ENCODE measurements at regions of chr9 and their contacts with region 1.

Region 1: DNA sequence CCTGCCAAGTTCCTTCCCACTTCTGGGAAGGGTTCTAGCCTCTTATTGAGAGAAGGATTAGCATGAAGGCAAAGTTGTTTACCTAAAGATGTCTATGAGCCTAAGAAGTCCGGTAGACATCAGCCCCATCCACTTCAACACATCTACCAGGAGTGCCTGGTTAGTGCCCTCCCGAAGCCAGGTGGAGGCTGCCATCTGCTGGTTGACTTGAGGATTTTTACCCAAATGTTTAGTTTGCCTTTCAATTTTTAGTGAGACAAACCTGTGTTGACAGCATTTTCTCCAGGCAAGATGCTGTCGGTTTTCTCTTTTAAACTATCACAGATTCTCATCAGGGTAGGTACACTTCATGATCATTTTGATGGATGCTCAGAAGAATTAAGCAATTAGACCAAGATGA is 83.6 kb upstream of the TNFSF8 start:
- DNase-seq: peak; percentile 67 to 71 (median 69)
- ATAC-seq: peak; percentile 88
- H3K4me3 ChIP-seq: no peak overlapping the region
- H3K27ac ChIP-seq: no peak overlapping the region
- H3K4me1 ChIP-seq: no peaks in the 10 kb centered on the region
- H3K27me3 ChIP-seq: no peaks in the 10 kb centered on the region
- CTCF ChIP-seq: peak; percentile 77 to 89 (median 79)
- EP300 ChIP-seq: no peak
- POLR2A ChIP-seq: no peak
- RAD21 ChIP-seq: peak; percentile 84 to 87

Region 2: DNA sequence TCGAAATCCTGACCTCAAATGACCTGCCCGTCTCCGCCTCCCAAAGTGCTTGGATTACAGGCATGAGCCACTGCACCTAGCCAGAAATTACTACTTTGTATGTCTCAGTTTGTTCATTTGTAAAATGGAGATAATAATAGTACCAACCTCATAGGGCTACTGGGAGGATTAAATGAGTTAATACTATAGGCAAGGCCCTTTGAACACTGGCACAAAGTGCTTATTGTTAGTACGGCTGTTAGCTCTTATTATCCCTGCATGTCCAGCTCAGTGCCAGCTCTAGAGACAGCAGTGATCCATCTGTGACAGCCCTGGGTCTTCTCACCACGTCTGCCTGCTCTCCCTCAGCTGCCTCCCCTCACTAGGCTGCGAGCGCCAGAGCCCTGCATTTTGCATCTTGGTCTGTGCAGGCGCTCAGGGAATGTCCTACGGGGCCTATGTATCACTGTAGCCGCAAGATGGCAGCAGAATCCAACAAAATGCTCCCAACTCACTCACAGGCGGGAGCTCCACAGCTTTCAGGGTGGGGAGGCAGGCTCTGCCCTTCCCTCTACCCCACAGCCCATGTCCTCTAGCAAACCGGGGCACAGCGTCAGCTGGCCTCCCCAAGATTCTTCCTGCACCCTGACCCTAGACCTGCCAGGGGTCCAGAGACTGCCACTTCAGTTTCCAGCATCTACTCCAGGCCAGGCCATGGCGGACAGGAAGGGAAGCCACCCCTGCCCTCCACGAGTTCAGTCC is 608.5 kb before region 1 on chr9:
- CTCF ChIA-PET with region 1: interaction called, 8 read pairs
- POLR2A ChIA-PET with region 1: no interaction called
- in situ Hi-C with region 1: no loop called
- intact Hi-C with region 1: loop called (anchors 1 kb)
- DNase-seq: peak; percentile 75 to 83 (median 80)
- ATAC-seq: peak; percentile 97
- H3K4me3 ChIP-seq: no peak overlapping the region
- H3K27ac ChIP-seq: no peak overlapping the region
- H3K4me1 ChIP-seq: no peaks in the 10 kb centered on the region; a peak in 2 of 5 replicates
- H3K27me3 ChIP-seq: peaks cover 0 to 5% of the 10 kb centered on the region in 2 experiments; a peak in 1 of 5 replicates
- CTCF ChIP-seq: peak; percentile 85 to 91 (median 88)
- EP300 ChIP-seq: no peak
- POLR2A ChIP-seq: no peak
- RAD21 ChIP-seq: peak; percentile 76 to 88

Region 3: GRCh38 chr9:114662081-114662989 is 351.7 kb before region 1 on chr9:
- CTCF ChIA-PET with region 1: interaction called, 15 read pairs
- POLR2A ChIA-PET with region 1: no interaction called
- in situ Hi-C with region 1: no loop called
- intact Hi-C with region 1: loop called (anchors 1 kb)
- DNase-seq: peak; percentile 66 to 82 (median 79)
- ATAC-seq: peak; percentile 95
- H3K4me3 ChIP-seq: no peak overlapping the region
- H3K27ac ChIP-seq: no peak overlapping the region
- H3K4me1 ChIP-seq: no peaks in the 10 kb centered on the region
- H3K27me3 ChIP-seq: peaks cover 13 to 59% of the 10 kb centered on the region in 2 experiments; a peak in 4 of 5 replicates
- CTCF ChIP-seq: peak; percentile 70 to 89 (median 80)
- EP300 ChIP-seq: no peak
- POLR2A ChIP-seq: no peak
- RAD21 ChIP-seq: peak; percentile 47 to 73; a peak in 3 of 4 replicates

Region 4: DNA sequence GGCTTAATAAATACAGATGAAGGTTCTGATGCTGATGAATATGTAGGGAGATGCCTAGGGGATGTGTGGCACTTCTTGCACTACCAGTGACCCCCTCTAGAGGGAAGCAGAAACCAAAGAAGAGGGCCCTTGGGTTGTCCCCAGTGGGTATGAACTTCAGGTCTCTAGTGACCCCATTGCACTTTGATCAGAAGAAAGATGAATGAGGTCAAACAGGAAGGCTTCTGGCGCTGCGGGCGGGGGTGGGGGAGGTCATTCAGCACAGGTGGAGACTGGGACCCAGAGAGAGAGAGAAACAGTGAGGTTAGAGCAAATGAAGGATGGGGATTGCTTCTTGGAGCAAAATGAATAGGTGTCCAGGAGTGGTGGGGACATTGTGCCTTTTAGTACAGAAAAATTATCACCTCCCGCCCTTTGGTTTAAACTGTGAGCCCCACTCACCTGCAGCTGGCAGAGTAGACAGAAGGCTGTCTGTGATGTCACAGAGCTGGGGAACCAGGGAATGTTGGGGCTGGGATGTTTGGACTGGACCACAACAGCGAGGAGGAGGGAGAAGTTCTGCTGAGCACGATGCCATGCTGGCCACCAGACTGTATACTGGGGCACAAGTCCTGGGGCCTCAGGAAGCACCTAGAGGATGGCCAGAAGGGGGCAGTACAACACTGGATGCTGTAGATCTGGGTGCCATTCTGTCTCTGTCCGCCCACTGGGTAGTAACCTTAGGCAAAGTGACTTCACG is 332.2 kb before region 1 on chr9 and contains the start of gene TEX48:
- CTCF ChIA-PET with region 1: interaction called, 5 read pairs
- POLR2A ChIA-PET with region 1: interaction called, 3 read pairs
- in situ Hi-C with region 1: no loop called
- intact Hi-C with region 1: loop called (anchors 1 kb)
- DNase-seq: peak; percentile 65 to 77 (median 75)
- ATAC-seq: peak; percentile 94
- H3K4me3 ChIP-seq: no peak within 1 kb of the TSS
- H3K27ac ChIP-seq: no peak within 1 kb of the TSS
- H3K4me1 ChIP-seq: peaks cover 0 to 3% of the 10 kb centered on the region in 2 experiments; a peak in 1 of 5 replicates
- H3K27me3 ChIP-seq: peaks cover 0 to under 1% of the 10 kb centered on the region in 2 experiments; a peak in 2 of 5 replicates
- CTCF ChIP-seq: peak; percentile 67 to 79 (median 78)
- EP300 ChIP-seq: no peak
- POLR2A ChIP-seq: no peak
- RAD21 ChIP-seq: peak; percentile 39 to 71
- polyA plus RNA-seq, gene TEX48: not detected

Region 5: GRCh38 chr9:114906908-114907571 is 107.0 kb before region 1 on chr9:
- CTCF ChIA-PET with region 1: no interaction called
- POLR2A ChIA-PET with region 1: no interaction called
- in situ Hi-C with region 1: no loop called
- intact Hi-C with region 1: loop called (anchors 5 kb)
- DNase-seq: peak in 1 of 4 experiments; percentile 12
- ATAC-seq: peak; percentile 79
- H3K4me3 ChIP-seq: no peak overlapping the region
- H3K27ac ChIP-seq: no peak overlapping the region
- H3K4me1 ChIP-seq: no peaks in the 10 kb centered on the region
- H3K27me3 ChIP-seq: no peaks in the 10 kb centered on the region
- CTCF ChIP-seq: peak; percentile 14 to 54 (median 40); a peak in 5 of 6 replicates
- EP300 ChIP-seq: no peak
- POLR2A ChIP-seq: no peak
- RAD21 ChIP-seq: peak; percentile 54 to 66